ENCODE measurements at regions of chr17 and their contacts with region 1.

Region 1: GRCh38 chr17:32794533-32795246 is 82.2 kb downstream of the MYO1D start:
- DNase-seq: no peak
- ATAC-seq: peak; percentile 53; the same call in 1 of the 2 replicates
- H3K4me3 ChIP-seq: no peak overlapping the region
- H3K27ac ChIP-seq: no peak overlapping the region
- H3K4me1 ChIP-seq: no peaks in the 10 kb centered on the region
- H3K27me3 ChIP-seq: no peaks in the 10 kb centered on the region
- CTCF ChIP-seq: no peak

Region 2: DNA sequence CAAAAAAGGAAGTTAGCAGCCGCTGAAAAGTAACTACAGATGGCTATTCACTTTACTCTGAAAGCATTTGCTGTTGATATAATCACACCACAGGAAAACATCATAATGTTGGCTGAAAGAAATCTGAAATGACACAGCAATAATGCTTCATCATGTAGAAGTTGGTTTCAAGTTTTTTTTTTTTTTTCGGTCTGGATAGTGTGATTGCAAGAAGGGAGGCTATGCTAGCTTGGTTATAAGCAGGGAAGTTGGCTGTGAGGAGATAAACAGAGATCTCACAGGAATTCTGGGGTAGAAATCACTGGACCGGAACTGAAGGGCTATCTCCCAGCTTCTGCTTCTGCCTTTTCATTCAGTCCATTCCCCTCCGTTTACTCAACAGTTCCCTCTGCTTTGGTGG is 24.3 kb after region 1 on chr17:
- CTCF ChIA-PET with region 1: no interaction called
- POLR2A ChIA-PET with region 1: interaction called, 17 read pairs
- intact Hi-C with region 1: no loop called
- DNase-seq: no peak
- ATAC-seq: no peak
- H3K4me3 ChIP-seq: no peak overlapping the region
- H3K27ac ChIP-seq: no peak overlapping the region
- H3K4me1 ChIP-seq: no peaks in the 10 kb centered on the region
- H3K27me3 ChIP-seq: no peaks in the 10 kb centered on the region
- CTCF ChIP-seq: no peak

Measured in PC-3 (cell line).